ENCODE measurements at regions of chr10 and their contacts with region 1.

Region 1: DNA sequence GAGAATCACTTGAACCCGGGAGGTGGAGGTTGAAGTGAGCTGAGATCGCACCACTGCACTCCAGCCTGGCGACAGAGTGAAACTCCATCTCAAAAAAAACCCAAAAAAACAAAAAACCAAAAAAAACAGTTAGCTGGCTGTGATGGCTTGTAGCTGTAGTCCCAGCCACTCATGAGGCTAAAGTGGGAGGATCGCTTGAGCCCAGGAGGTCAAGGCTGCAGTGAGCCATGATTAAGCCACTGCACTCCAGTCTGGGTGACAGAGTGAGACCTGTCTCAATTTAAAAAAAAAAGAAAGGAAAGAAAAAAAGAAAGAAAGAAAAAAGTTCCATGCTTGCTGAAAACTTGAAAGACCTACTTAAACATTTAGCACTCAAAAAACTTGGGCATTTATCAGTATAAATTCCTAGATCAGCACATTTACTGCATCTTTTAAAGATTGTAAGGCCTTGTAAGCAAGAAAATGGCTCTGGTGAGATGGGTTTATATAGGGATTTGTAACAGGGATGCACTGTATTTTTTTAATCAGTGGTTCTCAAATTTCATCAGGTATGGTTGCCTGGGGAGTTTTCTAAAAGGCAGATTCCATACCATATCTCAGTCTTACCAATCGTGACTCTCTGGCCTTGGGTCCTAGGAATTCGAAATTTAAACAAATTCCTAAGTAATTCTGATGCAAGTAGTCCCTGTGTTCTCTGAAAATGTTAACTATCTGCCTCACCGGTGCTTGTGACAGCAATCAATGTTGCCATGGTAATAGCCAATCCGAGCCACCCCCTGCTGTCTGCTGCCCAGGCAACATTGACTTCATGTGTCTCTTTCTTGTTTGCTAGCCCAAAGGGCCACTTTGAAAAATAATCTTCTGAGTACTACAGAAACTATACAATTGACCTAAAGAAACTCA is 11.5 kb upstream of the NT5C2 start:
- DNase-seq: no peak
- H3K4me3 ChIP-seq: no peak overlapping the region
- H3K4me3 Mint-ChIP-seq: no peak overlapping the region
- H3K27ac ChIP-seq: no peak overlapping the region
- H3K27ac Mint-ChIP-seq: no peak overlapping the region
- H3K4me1 ChIP-seq: no peaks in the 10 kb centered on the region
- H3K4me1 Mint-ChIP-seq: no peaks in the 10 kb centered on the region
- H3K27me3 ChIP-seq: no peaks in the 10 kb centered on the region
- H3K27me3 Mint-ChIP-seq: peaks cover 0 to 4% of the 10 kb centered on the region in 2 donors

Region 2: DNA sequence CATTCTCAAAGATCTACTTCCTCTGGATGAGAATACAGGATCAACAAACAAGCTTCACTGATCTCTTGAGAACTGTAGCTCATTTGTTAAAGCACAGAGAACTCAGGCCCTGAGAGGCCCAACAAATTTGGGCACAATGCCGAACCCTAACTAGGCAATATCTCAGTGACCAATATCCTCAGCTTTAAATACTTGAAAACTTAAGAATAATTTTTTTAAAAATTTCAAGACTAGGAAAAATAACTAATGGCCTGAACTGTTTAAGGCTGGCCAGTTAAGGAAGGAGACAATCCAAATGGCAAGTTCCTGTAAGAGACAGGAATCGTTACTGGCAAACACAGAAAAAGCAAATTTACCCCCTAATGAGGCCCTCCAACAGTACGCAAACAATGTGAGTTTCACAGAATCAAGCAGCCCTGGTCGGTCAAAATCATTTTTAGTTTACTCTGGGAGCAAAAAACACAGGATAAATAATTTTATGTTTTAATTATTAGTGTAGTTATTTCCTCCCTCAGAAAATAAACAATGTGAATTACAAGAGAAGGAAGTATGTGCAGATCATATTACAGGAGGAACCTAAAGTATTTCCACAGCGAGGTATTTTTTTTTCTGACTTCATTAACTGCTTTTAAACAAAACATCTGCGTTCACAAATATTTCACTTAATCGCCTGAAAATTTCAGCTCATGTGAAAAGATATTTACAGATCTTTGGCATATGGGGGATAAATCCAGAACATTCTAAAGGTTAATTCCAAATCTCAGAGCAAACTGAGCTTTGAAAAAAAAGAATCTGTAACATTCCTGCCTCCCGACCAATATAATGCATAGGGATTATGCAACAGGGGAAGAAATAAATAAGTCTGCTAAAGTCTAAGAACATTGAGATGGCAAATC is 51.1 kb before region 1 on chr10:
- CTCF ChIA-PET with region 1: no interaction called
- POLR2A ChIA-PET with region 1: interaction called, 13 read pairs
- DNase-seq: no peak
- H3K4me3 ChIP-seq: no peak overlapping the region
- H3K4me3 Mint-ChIP-seq: no peak overlapping the region
- H3K27ac ChIP-seq: no peak overlapping the region
- H3K27ac Mint-ChIP-seq: peak overlapping the region in 1 of 8 donors; percentile 46
- H3K4me1 ChIP-seq: no peaks in the 10 kb centered on the region
- H3K4me1 Mint-ChIP-seq: peaks cover 10 to 23% (median 12%) of the 10 kb centered on the region in 3 donors
- H3K27me3 ChIP-seq: no peaks in the 10 kb centered on the region
- H3K27me3 Mint-ChIP-seq: no peaks in the 10 kb centered on the region

Measured in CD8-positive, alpha-beta memory T cell (primary cell).